ENCODE measurements at regions of chr2 and their contacts with region 1.

Region 1: DNA sequence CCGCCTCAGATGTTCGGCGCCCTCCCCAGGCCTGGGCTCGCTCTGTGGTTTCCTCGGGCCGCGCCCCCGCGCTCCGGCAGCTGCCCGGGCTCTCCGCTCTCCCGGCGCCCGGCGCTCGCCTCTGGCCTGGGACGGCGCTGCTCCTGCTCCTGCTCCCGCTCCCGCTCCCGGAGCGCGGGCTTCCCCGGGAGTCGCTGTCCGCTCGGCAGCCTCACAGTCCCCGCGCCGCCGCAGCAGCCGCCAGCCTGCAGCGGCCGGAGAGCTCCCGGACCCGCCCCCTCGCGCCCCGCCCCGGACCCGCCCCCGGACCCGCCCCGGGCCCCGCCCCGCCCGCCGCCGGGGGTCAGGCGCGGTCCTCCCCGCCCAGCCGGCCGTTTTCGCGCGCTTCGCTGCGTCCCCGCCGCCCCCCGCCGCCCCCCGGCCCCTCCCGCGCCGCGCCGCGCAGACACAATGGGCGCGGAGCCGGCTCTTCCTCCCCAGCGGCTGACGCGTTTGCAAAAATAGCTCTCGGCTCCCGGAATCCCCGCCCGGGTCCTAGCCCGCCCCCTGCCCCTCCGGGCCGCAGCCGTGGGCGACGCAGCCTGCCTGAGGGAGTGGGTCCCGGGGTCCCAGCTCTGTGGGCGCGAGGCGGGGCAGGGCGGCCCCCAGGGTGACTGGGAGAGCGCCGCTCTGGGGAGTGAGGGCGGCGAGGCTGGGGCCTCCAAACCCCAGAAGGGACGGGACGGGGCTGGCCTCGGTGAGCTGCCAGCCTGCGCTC is at the start of gene ARL4C:
- DNase-seq: peak; percentile 72
- ATAC-seq: peak; percentile 68
- total RNA-seq, gene ARL4C: 10.7 TPM

Region 2: DNA sequence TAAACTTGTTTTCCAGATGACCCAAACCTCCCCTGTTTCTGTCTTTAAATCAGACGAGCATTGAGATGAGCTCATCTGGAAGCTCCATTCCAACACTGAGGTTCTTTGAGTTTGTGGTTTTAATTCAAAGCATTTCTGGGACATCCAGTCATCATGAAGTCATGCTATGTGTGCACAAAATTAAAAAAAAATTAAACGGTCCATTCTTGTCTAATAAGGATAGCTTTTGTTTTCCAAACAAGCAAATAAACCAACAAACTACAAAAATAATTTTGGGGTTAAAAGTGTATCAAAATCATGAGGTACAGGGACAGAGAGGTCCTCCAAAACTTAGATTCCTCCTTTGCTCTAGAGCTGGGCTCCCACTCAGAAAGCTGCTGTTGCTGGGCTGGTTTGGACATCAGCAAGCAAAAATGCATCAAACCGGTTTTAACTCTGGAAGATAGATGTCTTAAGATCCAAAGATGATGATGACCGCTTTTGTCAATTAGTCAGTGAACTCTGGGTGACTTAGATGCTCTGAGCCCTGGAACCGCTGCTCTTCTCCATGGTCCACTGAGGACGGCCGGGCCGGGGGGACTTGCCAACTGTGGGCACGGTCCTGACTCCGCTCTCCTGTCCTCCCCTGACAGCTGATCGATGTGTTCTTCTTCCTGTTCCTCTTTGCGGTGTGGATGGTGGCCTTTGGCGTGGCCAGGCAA is 514.4 kb before region 1 on chr2:
- intact Hi-C with region 1: loop called (anchors 10 kb)
- DNase-seq: no peak
- ATAC-seq: no peak

Measured in sciatic nerve (tissue), 2 donors.